RWPE1 (cell line): ENCODE measurements at regions of chr14 and their contacts with region 1.

Region 1: GRCh38 chr14:37709419-37710195 is 114.2 kb downstream of the TTC6 start:
- DNase-seq: peak; percentile 28
- H3K27ac ChIP-seq: no peak overlapping the region
- CTCF ChIP-seq: peak; percentile 33; the same call in 1 of the 2 replicates

Region 2: DNA sequence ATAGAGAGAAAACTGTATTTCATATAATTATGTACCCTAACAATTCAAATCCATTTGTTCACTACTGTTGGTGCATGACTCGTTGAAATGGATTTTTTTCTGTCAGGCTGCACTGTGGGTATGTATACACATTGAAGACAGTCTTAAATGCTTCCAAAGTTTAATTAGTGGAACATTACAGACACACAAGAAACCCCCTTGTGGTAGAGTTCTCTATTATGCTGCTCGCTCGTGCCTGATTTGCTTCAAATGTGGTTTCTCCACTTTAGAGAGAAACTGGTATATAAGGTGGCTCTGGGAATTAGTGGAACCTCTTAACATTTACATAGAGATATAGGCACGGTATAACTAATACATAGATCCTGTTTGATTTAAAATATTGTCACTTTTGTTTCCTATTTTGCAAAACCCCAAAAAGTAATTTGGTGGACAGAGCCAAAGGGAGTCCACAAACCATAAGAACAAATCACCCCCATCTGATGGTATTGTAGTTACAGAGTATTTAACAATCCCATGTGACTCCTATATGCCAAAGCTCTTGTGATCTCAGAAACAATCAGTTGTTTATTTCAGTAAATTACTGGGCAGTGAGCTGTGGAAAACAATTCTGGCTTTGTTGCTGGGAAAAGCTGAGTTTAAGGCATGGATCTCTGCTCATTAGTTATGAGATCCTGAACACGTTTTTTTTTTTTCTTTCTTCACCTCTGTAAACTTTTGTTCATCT is 1724.0 kb before region 1 on chr14:
- CTCF ChIA-PET with region 1: no interaction called
- POLR2A ChIA-PET with region 1: no interaction called
- DNase-seq: no peak
- H3K27ac ChIP-seq: no peak overlapping the region
- CTCF ChIP-seq: no peak

Region 3: GRCh38 chr14:37610945-37611523 is 98.6 kb before region 1 on chr14:
- CTCF ChIA-PET with region 1: no interaction called
- POLR2A ChIA-PET with region 1: no interaction called
- DNase-seq: no peak
- H3K27ac ChIP-seq: no peak overlapping the region
- CTCF ChIP-seq: no peak

Region 4: GRCh38 chr14:37650021-37650715 is 59.4 kb before region 1 on chr14:
- CTCF ChIA-PET with region 1: no interaction called
- POLR2A ChIA-PET with region 1: no interaction called
- DNase-seq: no peak
- H3K27ac ChIP-seq: no peak overlapping the region
- CTCF ChIP-seq: no peak

Region 5: DNA sequence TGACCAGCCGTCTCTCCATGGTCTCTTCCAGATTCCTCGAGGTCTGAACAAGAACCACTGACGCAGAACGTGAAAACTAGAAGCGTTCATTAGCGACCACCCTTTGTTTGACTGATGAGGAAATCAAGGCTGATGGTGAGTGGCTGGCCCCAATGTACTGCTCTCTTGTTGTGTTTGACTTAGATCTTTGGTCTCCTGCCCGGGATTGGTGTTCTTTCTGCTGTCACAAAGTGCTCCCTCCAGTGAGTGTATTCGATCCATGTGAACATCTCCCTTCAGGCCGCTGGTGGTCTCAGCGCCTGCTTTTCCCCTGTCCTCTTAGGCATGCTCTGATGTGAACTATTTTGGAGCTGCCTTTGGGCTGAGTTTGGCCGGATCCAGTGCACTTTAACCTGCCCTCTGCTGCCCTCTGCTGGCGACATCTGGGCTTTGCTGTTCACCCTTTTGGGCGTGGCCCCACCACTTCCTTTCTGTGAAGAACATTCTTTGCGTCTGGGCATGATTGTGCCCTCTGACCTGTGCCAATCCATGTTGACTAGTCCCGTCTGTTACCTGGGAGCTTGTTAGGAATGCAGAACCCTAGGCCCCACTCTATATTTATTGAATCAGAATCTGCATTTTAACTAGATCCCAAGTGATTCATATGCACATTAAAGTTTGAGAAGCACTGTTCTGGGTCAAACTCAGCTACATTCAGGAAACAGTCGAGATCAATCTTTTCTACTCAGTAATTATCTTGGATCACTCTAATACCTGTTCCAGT is 165.0 kb after region 1 on chr14:
- CTCF ChIA-PET with region 1: interaction called, 15 read pairs
- POLR2A ChIA-PET with region 1: no interaction called
- DNase-seq: peak; percentile 77
- H3K27ac ChIP-seq: no peak overlapping the region
- CTCF ChIP-seq: peak; percentile 85